Heart left ventricle (tissue), 16 donors: ENCODE measurements at regions of chr12 and their contacts with region 1.

Region 1: GRCh38 chr12:110888256-110888991 is 32.0 kb downstream of the MYL2 start:
- DNase-seq: no peak
- ATAC-seq: peak in 1 of 4 donors; percentile 6
- H3K4me3 ChIP-seq: peak overlapping the region in 5 of 12 donors; percentile 44 to 64 (median 61)
- H3K27ac ChIP-seq: peak overlapping the region in 2 of 12 donors; percentile 65 to 70
- H3K4me1 ChIP-seq: peaks cover 0 to 11% (median 0%) of the 10 kb centered on the region in 12 donors
- H3K27me3 ChIP-seq: no peaks in the 10 kb centered on the region
- CTCF ChIP-seq: peak in 4 of 12 donors; percentile 3 to 25 (median 14)
- POLR2A ChIP-seq: no peak

Region 2: GRCh38 chr12:110501752-110502738 is 386.4 kb before region 1 on chr12 and contains the starts of genes RAD9B and VPS29:
- intact Hi-C with region 1: loop called in 1 of 10 experiments (anchors 5 kb)
- DNase-seq: peak; percentile 98 to 99 (median 98)
- ATAC-seq: peak; percentile 98 to 99 (median 99)
- H3K4me3 ChIP-seq: peak within 1 kb of the TSS; percentile 65 to 98 (median 89)
- H3K27ac ChIP-seq: peak within 1 kb of the TSS; percentile 64 to 96 (median 90)
- H3K4me1 ChIP-seq: peaks cover 0 to 40% (median 29%) of the 10 kb centered on the region in 12 donors
- H3K27me3 ChIP-seq: no peaks in the 10 kb centered on the region
- CTCF ChIP-seq: no peak
- POLR2A ChIP-seq: peak in 1 of 2 donors; percentile 87
- total RNA-seq, gene RAD9B: 0.67 to 4.8 (median 2.4) TPM in 7 of 9 donors, not detected in the others
- total RNA-seq, gene VPS29: 66.7 to 149 (median 89.5) TPM

Region 3: GRCh38 chr12:110613771-110614684 is 274.4 kb before region 1 on chr12 and contains the start of gene TCTN1:
- intact Hi-C with region 1: loop called in 7 of 10 experiments (anchors 5 to 10 kb)
- DNase-seq: peak; percentile 97 to 99 (median 98)
- ATAC-seq: peak; percentile 98 to 100 (median 100)
- H3K4me3 ChIP-seq: peak within 1 kb of the TSS; percentile 24 to 93 (median 65)
- H3K27ac ChIP-seq: peak within 1 kb of the TSS in 11 of 12 donors; percentile 47 to 82 (median 67)
- H3K4me1 ChIP-seq: peaks cover 0 to 15% (median 7%) of the 10 kb centered on the region in 12 donors
- H3K27me3 ChIP-seq: no peaks in the 10 kb centered on the region
- CTCF ChIP-seq: peak in 4 of 12 donors; percentile 10 to 28 (median 21)
- POLR2A ChIP-seq: peak in 1 of 2 donors; percentile 69
- total RNA-seq, gene TCTN1: 17.3 to 27.7 (median 20.2) TPM

Region 4: GRCh38 chr12:110698171-110698902 is 190.1 kb before region 1 on chr12:
- intact Hi-C with region 1: loop called in 5 of 10 experiments (anchors 5 to 10 kb)
- DNase-seq: peak; percentile 80 to 86 (median 81)
- ATAC-seq: peak; percentile 69 to 86 (median 72)
- H3K4me3 ChIP-seq: peak overlapping the region in 8 of 12 donors; percentile 10 to 41 (median 26)
- H3K27ac ChIP-seq: peak overlapping the region in 10 of 12 donors; percentile 4 to 68 (median 39)
- H3K4me1 ChIP-seq: peaks cover 7 to 53% (median 15%) of the 10 kb centered on the region in 12 donors
- H3K27me3 ChIP-seq: no peaks in the 10 kb centered on the region
- CTCF ChIP-seq: peak; percentile 58 to 85 (median 72)
- POLR2A ChIP-seq: peak in 1 of 2 donors; percentile 24

Region 5: DNA sequence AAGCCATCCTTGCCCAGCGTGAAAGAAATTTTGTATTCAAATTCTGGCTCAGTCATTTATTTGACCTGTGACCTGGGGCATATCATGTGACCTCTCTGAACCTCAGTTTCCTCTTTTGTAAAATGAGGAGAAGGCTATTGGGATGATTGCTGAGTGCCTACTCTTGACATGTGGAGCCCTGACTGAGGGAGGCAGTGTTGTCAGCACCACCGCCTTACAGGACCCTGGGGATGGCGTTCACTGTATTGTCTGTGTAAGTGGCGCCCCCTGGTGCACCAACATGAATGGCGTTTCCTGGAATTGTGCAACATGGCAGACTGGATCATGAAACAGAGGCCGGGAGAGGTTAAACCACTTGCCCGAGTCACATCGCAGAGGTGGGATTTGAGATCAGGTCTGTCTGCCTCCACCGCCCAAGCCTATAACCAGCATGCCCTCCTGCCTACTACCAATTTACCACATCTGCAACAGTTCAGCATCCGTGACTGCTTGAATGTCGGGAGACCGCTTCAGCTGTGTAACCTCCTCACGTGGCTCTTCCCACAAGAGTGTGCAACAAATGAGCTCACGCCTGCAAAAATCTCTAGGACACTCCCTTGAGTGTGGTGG is 61.7 kb before region 1 on chr12:
- intact Hi-C with region 1: loop called in 5 of 10 experiments (anchors 1 to 5 kb)
- DNase-seq: peak; percentile 81 to 92 (median 84)
- ATAC-seq: peak; percentile 70 to 97 (median 95)
- H3K4me3 ChIP-seq: peak overlapping the region in 9 of 12 donors; percentile 13 to 47 (median 28)
- H3K27ac ChIP-seq: no peak overlapping the region
- H3K4me1 ChIP-seq: peaks cover 0 to 13% (median under 1%) of the 10 kb centered on the region in 12 donors
- H3K27me3 ChIP-seq: no peaks in the 10 kb centered on the region
- CTCF ChIP-seq: peak; percentile 67 to 86 (median 80)
- POLR2A ChIP-seq: no peak